ENCODE measurements at regions of chr20 and their contacts with region 1.

Region 1: GRCh38 chr20:18793625-18794427 is 19.8 kb upstream of the SCP2D1 start:
- DNase-seq: peak; percentile 79 to 98
- ATAC-seq: peak; percentile 91 to 97 (median 95)
- H3K4me3 ChIP-seq: peak overlapping the region; percentile 71
- H3K4me3 Mint-ChIP-seq: peak overlapping the region; percentile 95
- H3K27ac ChIP-seq: peak overlapping the region; percentile 92
- H3K27ac Mint-ChIP-seq: peak overlapping the region; percentile 98
- H3K4me1 ChIP-seq: peaks cover 12% of the 10 kb centered on the region
- H3K4me1 Mint-ChIP-seq: peaks cover 18 to 19% of the 10 kb centered on the region in 2 donors
- H3K27me3 ChIP-seq: peaks cover 2% of the 10 kb centered on the region
- H3K27me3 Mint-ChIP-seq: peaks cover 6 to 43% of the 10 kb centered on the region in 2 donors
- CTCF ChIP-seq: no peak

Region 2: GRCh38 chr20:18639501-18639979 is 154.3 kb before region 1 on chr20:
- intact Hi-C with region 1: no loop called
- DNase-seq: no peak
- ATAC-seq: no peak
- H3K4me3 ChIP-seq: no peak overlapping the region
- H3K4me3 Mint-ChIP-seq: no peak overlapping the region
- H3K27ac ChIP-seq: no peak overlapping the region
- H3K27ac Mint-ChIP-seq: no peak overlapping the region
- H3K4me1 ChIP-seq: no peaks in the 10 kb centered on the region
- H3K4me1 Mint-ChIP-seq: peaks cover 0 to 6% of the 10 kb centered on the region in 2 donors
- H3K27me3 ChIP-seq: no peaks in the 10 kb centered on the region
- H3K27me3 Mint-ChIP-seq: no peaks in the 10 kb centered on the region
- CTCF ChIP-seq: no peak

Region 3: GRCh38 chr20:18748987-18749386 is 44.8 kb before region 1 on chr20:
- intact Hi-C with region 1: loop called (anchors 5 kb)
- DNase-seq: no peak
- ATAC-seq: no peak
- H3K4me3 ChIP-seq: no peak overlapping the region
- H3K4me3 Mint-ChIP-seq: no peak overlapping the region
- H3K27ac ChIP-seq: no peak overlapping the region
- H3K27ac Mint-ChIP-seq: no peak overlapping the region
- H3K4me1 ChIP-seq: peaks cover under 1% of the 10 kb centered on the region
- H3K4me1 Mint-ChIP-seq: peaks cover 11 to 32% of the 10 kb centered on the region in 2 donors
- H3K27me3 ChIP-seq: no peaks in the 10 kb centered on the region
- H3K27me3 Mint-ChIP-seq: no peaks in the 10 kb centered on the region
- CTCF ChIP-seq: no peak